Activated CD4-positive, alpha-beta memory T cell treated with anti-CD3 and anti-CD28 coated beads for 36 hours (primary cell): ENCODE measurements at regions of chr19 and their contacts with region 1.

Region 1: GRCh38 chr19:11924886-11925650 is at the start of gene ZNF700:
- DNase-seq: peak; percentile 97
- H3K4me3 Mint-ChIP-seq: peak within 1 kb of the TSS; percentile 96
- H3K27ac Mint-ChIP-seq: peak within 1 kb of the TSS; percentile 99
- H3K4me1 Mint-ChIP-seq: peaks cover 35% of the 10 kb centered on the region
- H3K27me3 Mint-ChIP-seq: no peaks in the 10 kb centered on the region
- total RNA-seq, gene ZNF700: 12.9 to 13.0 TPM

Region 2: DNA sequence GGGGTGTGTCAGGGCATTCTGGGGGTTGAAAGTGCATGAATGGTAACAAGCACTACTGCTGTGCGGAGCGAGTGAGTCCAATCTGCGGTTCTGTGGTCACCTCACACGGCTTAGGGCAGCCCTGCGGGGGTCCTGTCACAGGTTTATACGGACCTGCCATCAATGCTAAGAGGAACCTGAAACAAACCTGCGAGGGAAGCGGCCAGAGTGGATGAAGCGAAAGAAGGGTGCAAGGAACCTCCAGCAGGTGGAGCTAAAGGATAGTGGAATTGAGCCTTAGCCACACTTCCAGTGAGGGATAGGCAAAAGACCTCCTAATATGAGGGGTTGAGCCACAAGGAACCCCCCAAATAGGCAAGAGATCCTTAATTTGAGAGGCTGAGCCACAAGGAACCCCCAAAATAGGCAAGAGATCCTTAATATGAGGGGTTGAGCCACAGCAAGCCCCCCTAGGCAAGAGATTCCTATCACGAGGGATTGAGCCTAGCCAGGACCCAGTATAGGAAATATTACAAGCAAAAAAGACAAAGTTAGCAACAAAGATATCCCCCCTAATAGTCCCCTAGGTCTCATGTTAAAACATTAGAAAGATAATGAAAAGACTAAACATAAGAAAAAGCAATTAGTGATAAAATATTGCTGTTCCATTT is 43.8 kb before region 1 on chr19:
- CTCF ChIA-PET with region 1: interaction called, 8 read pairs
- POLR2A ChIA-PET with region 1: no interaction called
- intact Hi-C with region 1: loop called (anchors 5 kb)
- DNase-seq: peak; percentile 69
- H3K4me3 Mint-ChIP-seq: no peak overlapping the region
- H3K27ac Mint-ChIP-seq: no peak overlapping the region
- H3K4me1 Mint-ChIP-seq: no peaks in the 10 kb centered on the region
- H3K27me3 Mint-ChIP-seq: no peaks in the 10 kb centered on the region

Region 3: GRCh38 chr19:11913680-11914079 is 11.4 kb before region 1 on chr19:
- CTCF ChIA-PET with region 1: no interaction called
- POLR2A ChIA-PET with region 1: no interaction called
- intact Hi-C with region 1: no loop called
- DNase-seq: no peak
- H3K4me3 Mint-ChIP-seq: no peak overlapping the region
- H3K27ac Mint-ChIP-seq: no peak overlapping the region
- H3K4me1 Mint-ChIP-seq: no peaks in the 10 kb centered on the region
- H3K27me3 Mint-ChIP-seq: no peaks in the 10 kb centered on the region

Region 4: GRCh38 chr19:11964858-11965645 is 40.0 kb after region 1 on chr19 and contains the start of gene ZNF763:
- CTCF ChIA-PET with region 1: interaction called, 32 read pairs
- POLR2A ChIA-PET with region 1: interaction called, 7 read pairs
- intact Hi-C with region 1: loop called (anchors 1 kb)
- DNase-seq: peak; percentile 94
- H3K4me3 Mint-ChIP-seq: peak within 1 kb of the TSS; percentile 88
- H3K27ac Mint-ChIP-seq: peak within 1 kb of the TSS; percentile 79
- H3K4me1 Mint-ChIP-seq: peaks cover 20% of the 10 kb centered on the region
- H3K27me3 Mint-ChIP-seq: no peaks in the 10 kb centered on the region
- total RNA-seq, gene ZNF763: 0.97 to 1.6 TPM

Region 5: GRCh38 chr19:12000152-12000981 is 75.3 kb after region 1 on chr19:
- CTCF ChIA-PET with region 1: interaction called, 9 read pairs
- POLR2A ChIA-PET with region 1: no interaction called
- intact Hi-C with region 1: loop called (anchors 1 kb)
- DNase-seq: peak; percentile 54
- H3K4me3 Mint-ChIP-seq: no peak overlapping the region
- H3K27ac Mint-ChIP-seq: peak overlapping the region; percentile 72
- H3K4me1 Mint-ChIP-seq: peaks cover 20% of the 10 kb centered on the region
- H3K27me3 Mint-ChIP-seq: no peaks in the 10 kb centered on the region

Region 6: DNA sequence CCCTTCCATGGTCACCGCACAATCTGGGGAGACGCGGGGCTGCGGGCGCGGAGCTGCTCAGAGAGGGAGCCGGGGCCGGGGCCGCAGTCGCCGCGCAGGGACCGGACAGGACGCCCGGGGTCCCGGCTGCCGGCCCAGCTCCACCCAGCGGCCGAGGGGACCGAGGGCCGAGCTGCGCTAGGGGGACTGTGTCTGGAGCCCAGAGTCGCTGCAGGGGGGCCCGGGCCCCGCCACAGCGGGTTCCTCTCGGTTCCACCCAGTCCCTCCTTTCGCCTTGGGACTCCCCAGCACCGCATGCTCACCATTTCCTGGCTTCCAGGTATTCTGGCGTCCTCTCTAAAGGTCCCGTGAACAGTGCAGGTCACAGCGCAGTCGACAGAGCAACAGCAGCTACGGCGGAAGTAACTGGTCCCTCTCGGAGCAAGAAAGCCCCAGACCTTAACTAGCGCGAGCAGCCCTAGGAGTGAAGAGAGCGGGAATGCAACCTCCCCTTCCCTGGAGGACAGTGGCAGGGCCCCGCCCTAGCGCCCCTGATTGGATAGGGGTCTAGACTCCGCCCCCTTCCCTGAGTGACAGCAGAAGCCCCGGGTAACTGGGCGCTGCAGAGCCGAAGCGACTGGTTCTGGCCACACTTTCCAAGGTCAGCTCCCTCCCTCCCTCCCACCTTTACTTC is 127.6 kb after region 1 on chr19 and contains the start of gene ZNF878:
- CTCF ChIA-PET with region 1: interaction called, 16 read pairs
- POLR2A ChIA-PET with region 1: interaction called, 3 read pairs
- intact Hi-C with region 1: loop called (anchors 2 kb)
- DNase-seq: peak; percentile 76
- H3K4me3 Mint-ChIP-seq: peak within 1 kb of the TSS; percentile 71
- H3K27ac Mint-ChIP-seq: no peak within 1 kb of the TSS
- H3K4me1 Mint-ChIP-seq: peaks cover 9% of the 10 kb centered on the region
- H3K27me3 Mint-ChIP-seq: peaks cover 15% of the 10 kb centered on the region
- total RNA-seq, gene ZNF878: 0.57 to 0.80 TPM